CD14-positive monocyte (primary cell): ENCODE measurements at regions of chrX and their contacts with region 1.

Region 1: GRCh38 chrX:109886122-109886761 is 116.7 kb upstream of the TMEM164 start:
- DNase-seq: peak; percentile 43 to 52 (median 47)
- H3K4me3 ChIP-seq: peak overlapping the region in 1 of 3 experiments; percentile 5
- H3K4me3 Mint-ChIP-seq: peak overlapping the region in 1 of 2 donors; percentile 28
- H3K27ac ChIP-seq: peak overlapping the region in 1 of 2 donors; percentile 89
- H3K27ac Mint-ChIP-seq: peak overlapping the region; percentile 48 to 92 (median 77)
- H3K4me1 ChIP-seq: peaks cover 54 to 63% of the 10 kb centered on the region in 2 donors
- H3K4me1 Mint-ChIP-seq: peaks cover 52% of the 10 kb centered on the region
- H3K27me3 ChIP-seq: no peaks in the 10 kb centered on the region
- H3K27me3 Mint-ChIP-seq: peaks cover 0 to 18% (median 1%) of the 10 kb centered on the region in 3 donors
- CTCF ChIP-seq: peak; percentile 75

Region 2: GRCh38 chrX:109709129-109709631 is 177.1 kb before region 1 on chrX:
- intact Hi-C with region 1: loop called (anchors 10 kb)
- DNase-seq: peak; percentile 28 to 64 (median 54)
- H3K4me3 ChIP-seq: peak overlapping the region in 2 of 3 experiments; percentile 16 to 42
- H3K4me3 Mint-ChIP-seq: peak overlapping the region; percentile 37 to 76
- H3K27ac ChIP-seq: peak overlapping the region; percentile 70 to 76
- H3K27ac Mint-ChIP-seq: peak overlapping the region; percentile 86 to 92 (median 90)
- H3K4me1 ChIP-seq: peaks cover 62 to 76% of the 10 kb centered on the region in 2 donors
- H3K4me1 Mint-ChIP-seq: peaks cover 68% of the 10 kb centered on the region
- H3K27me3 ChIP-seq: peaks cover 0 to 3% of the 10 kb centered on the region in 2 donors
- H3K27me3 Mint-ChIP-seq: peaks cover 0 to 14% (median 0%) of the 10 kb centered on the region in 3 donors
- CTCF ChIP-seq: no peak

Region 3: DNA sequence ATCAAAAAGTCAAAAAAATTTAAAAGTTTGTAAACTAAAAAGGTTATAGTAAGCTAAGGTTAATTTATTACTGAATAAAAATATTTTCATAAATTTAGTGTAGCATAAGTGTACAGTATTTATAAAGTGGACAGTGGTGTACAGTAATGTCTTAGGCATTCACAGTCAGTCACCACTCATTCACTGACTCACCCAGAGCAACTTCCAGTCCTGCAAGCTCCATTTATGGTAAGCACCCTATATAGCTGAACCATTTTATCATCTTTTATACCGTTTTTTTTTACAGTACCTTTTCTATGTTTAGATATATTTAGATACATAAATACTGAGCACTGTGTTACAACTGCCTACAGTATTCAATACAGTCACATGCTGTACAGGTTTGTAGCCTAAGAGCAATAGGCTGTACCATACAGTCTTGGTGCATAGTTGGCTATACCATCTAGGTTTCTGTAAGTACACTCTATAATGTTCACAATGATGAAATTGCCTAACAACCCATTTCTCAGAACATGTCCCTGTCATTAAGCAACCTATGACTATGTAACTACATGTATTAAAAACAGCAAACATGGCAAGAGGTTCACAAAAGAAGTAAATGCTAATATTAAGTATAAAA is 171.8 kb before region 1 on chrX:
- intact Hi-C with region 1: loop called (anchors 10 kb)
- DNase-seq: peak in 1 of 3 donors; percentile 34
- H3K4me3 ChIP-seq: no peak overlapping the region
- H3K4me3 Mint-ChIP-seq: no peak overlapping the region
- H3K27ac ChIP-seq: no peak overlapping the region
- H3K27ac Mint-ChIP-seq: peak overlapping the region in 2 of 7 donors; percentile 6 to 56
- H3K4me1 ChIP-seq: peaks cover 47 to 54% of the 10 kb centered on the region in 2 donors
- H3K4me1 Mint-ChIP-seq: peaks cover 47% of the 10 kb centered on the region
- H3K27me3 ChIP-seq: peaks cover 0 to 3% of the 10 kb centered on the region in 2 donors
- H3K27me3 Mint-ChIP-seq: peaks cover 0 to 16% (median 0%) of the 10 kb centered on the region in 3 donors
- CTCF ChIP-seq: no peak

Region 4: GRCh38 chrX:109840585-109840984 is 45.7 kb before region 1 on chrX:
- intact Hi-C with region 1: loop called in 1 of 2 experiments (anchors 5 kb)
- DNase-seq: peak; percentile 82 to 89 (median 84)
- H3K4me3 ChIP-seq: peak overlapping the region in 2 of 3 experiments; percentile 1 to 37
- H3K4me3 Mint-ChIP-seq: no peak overlapping the region
- H3K27ac ChIP-seq: peak overlapping the region; percentile 90 to 92
- H3K27ac Mint-ChIP-seq: no peak overlapping the region
- H3K4me1 ChIP-seq: peaks cover 46 to 52% of the 10 kb centered on the region in 2 donors
- H3K4me1 Mint-ChIP-seq: peaks cover 30% of the 10 kb centered on the region
- H3K27me3 ChIP-seq: peaks cover 0 to 2% of the 10 kb centered on the region in 2 donors
- H3K27me3 Mint-ChIP-seq: peaks cover 0 to 17% (median 0%) of the 10 kb centered on the region in 3 donors
- CTCF ChIP-seq: no peak

Region 5: DNA sequence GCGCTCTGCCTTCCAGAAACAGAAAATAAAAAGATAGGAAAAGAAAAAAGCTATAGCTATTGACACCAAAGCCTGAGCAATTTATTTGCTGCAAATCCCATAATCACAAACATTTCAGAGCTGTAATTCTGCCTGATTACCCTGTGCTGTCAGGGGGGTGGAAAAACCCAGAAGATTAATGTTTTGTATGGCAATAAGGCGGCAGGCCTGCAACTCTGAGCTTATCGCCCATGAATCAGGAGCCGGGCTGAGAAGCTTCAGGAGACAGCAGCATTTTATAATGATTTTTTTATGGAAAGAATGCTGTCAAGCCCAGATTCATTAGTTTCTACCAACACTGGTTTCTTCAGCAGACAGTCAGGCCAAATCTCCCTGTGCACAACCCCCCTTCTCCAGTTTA is 34.1 kb after region 1 on chrX:
- intact Hi-C with region 1: no loop called
- DNase-seq: no peak
- H3K4me3 ChIP-seq: no peak overlapping the region
- H3K4me3 Mint-ChIP-seq: no peak overlapping the region
- H3K27ac ChIP-seq: no peak overlapping the region
- H3K27ac Mint-ChIP-seq: no peak overlapping the region
- H3K4me1 ChIP-seq: no peaks in the 10 kb centered on the region
- H3K4me1 Mint-ChIP-seq: no peaks in the 10 kb centered on the region
- H3K27me3 ChIP-seq: peaks cover 0 to 8% of the 10 kb centered on the region in 2 donors
- H3K27me3 Mint-ChIP-seq: peaks cover 0 to 11% (median 2%) of the 10 kb centered on the region in 3 donors
- CTCF ChIP-seq: no peak

Region 6: DNA sequence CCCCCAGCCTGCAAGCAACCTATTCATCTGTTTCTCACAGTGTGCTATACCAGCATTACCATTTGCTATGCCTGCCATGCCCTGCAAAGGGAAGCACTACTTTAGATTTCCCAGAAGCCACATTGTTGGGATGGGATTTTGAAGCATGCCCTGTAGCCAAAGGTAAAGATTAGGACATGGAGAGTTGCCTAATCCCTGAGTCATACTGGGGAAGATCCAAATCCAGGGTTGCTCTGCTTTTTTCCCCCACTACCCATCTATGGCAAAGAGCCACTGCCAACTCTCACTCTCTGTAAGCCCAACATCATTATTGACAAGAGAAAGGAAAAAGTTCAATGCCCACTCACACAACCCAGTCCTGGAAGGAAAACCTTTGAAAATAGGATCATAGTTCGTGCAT is 80.0 kb after region 1 on chrX:
- intact Hi-C with region 1: no loop called
- DNase-seq: no peak
- H3K4me3 ChIP-seq: no peak overlapping the region
- H3K4me3 Mint-ChIP-seq: no peak overlapping the region
- H3K27ac ChIP-seq: no peak overlapping the region
- H3K27ac Mint-ChIP-seq: no peak overlapping the region
- H3K4me1 ChIP-seq: no peaks in the 10 kb centered on the region
- H3K4me1 Mint-ChIP-seq: no peaks in the 10 kb centered on the region
- H3K27me3 ChIP-seq: peaks cover 0 to 2% of the 10 kb centered on the region in 2 donors
- H3K27me3 Mint-ChIP-seq: peaks cover 0 to 23% (median 2%) of the 10 kb centered on the region in 3 donors
- CTCF ChIP-seq: no peak